Activated naive CD4-positive, alpha-beta T cell treated with anti-CD3 and anti-CD28 coated beads for 36 hours (primary cell): ENCODE measurements at regions of chr11 and their contacts with region 1.

Region 1: DNA sequence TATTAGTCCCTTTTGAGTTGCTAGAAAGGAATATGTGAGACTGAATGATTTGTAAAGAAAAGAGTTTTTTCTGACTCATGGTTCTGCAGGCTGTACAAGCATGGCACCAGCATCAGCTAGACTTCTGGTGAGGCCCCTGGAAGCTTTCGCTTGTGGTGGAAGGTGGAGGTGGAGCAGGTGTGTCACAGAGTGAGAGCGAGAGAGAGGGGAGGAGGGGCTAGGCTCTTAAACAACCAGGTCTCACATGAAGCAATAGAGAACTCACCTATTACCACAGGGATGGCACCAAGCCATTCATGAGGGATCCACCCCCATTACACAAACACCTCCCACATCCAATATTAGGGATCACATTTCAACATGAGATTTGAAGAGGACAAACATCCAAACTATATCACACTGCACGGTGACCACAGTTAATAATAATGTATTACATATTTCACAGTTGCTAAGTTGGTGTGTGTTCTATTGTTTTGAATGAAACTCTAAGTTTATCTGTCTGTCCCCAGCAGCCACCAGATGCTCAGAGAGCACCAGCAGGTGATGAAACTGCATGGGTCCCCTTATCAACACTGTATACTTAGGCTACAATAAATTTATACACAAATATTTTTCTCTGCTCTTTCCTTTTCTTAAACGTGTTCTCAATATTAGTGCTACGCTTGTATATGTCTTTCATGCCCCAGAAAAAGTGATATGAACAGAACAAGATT is 14.1 kb downstream of the ZFP91 start:
- DNase-seq: peak; percentile 71
- H3K4me3 Mint-ChIP-seq: no peak overlapping the region
- H3K27ac Mint-ChIP-seq: peak overlapping the region; percentile 67
- H3K4me1 Mint-ChIP-seq: peaks cover 73% of the 10 kb centered on the region
- H3K27me3 Mint-ChIP-seq: no peaks in the 10 kb centered on the region

Region 2: GRCh38 chr11:58316142-58316541 is 276.8 kb before region 1 on chr11:
- CTCF ChIA-PET with region 1: no interaction called
- intact Hi-C with region 1: no loop called
- DNase-seq: no peak
- H3K4me3 Mint-ChIP-seq: no peak overlapping the region
- H3K27ac Mint-ChIP-seq: no peak overlapping the region
- H3K4me1 Mint-ChIP-seq: no peaks in the 10 kb centered on the region
- H3K27me3 Mint-ChIP-seq: peaks cover 11% of the 10 kb centered on the region

Region 3: GRCh38 chr11:58573451-58574104 is 19.3 kb before region 1 on chr11:
- CTCF ChIA-PET with region 1: interaction called, 13 read pairs
- intact Hi-C with region 1: loop called (anchors 1 kb)
- DNase-seq: peak; percentile 87
- H3K4me3 Mint-ChIP-seq: peak overlapping the region; percentile 100
- H3K27ac Mint-ChIP-seq: peak overlapping the region; percentile 99
- H3K4me1 Mint-ChIP-seq: peaks cover 54% of the 10 kb centered on the region
- H3K27me3 Mint-ChIP-seq: no peaks in the 10 kb centered on the region

Region 4: DNA sequence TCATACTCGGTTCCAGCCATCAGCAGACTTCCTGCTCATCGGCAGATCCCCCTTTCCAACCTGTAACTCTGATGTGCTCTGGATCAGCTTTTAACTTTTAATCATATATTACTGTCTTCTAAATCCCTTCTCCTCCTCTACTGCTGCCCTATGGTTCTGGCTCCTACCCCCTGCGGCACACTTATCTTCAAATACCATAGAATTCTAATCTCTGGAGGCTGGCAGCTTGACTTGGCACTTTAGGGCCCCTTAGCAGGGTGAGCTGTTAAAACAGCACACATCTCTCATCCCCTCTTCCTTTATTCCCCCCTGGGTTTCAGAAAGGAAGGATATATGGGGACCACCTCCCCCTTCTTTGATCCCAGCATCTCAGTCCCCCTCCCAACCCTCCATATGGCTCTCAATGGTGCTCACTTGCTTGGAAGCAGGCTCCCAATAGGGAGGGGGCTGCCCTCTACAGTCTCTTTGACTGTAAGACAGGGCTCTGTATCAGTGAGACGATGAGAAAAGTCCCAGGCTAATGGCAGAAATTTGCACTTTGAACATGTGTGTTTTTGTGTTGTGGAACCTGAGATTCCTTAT is 25.2 kb after region 1 on chr11:
- CTCF ChIA-PET with region 1: interaction called, 3 read pairs
- intact Hi-C with region 1: loop called (anchors 2 kb)
- DNase-seq: peak; percentile 31
- H3K4me3 Mint-ChIP-seq: no peak overlapping the region
- H3K27ac Mint-ChIP-seq: peak overlapping the region; percentile 39
- H3K4me1 Mint-ChIP-seq: peaks cover 31% of the 10 kb centered on the region
- H3K27me3 Mint-ChIP-seq: no peaks in the 10 kb centered on the region